ENCODE measurements at regions of chr17 and their contacts with region 1.

Region 1: DNA sequence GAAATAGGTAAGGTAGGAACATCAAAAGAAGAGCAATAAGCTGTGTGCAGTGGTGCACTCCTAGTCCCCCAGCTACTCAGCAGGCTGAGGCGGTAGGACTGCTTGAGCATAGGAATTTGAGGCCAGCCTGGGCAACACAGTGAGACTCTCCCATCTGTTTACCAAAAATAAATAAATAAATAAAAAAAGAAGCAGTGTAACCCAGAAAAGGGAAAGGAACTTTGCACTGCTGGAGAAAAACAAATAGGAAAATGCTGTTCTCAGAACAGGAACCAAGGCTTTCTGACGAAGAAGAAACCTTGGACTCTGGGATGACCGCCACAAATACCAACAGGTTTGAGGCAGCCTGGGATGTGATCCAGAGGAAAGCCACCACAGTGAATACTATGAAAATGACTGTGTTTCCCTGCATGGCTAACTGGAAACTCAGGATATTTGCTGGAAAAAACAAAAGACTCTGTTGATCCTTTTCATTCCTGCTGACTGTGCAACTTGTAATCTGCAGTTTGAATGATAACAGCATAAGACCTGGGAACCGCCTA is 41.2 kb downstream of the TTC19 start:
- DNase-seq: no peak
- H3K4me3 ChIP-seq: no peak overlapping the region
- H3K4me3 Mint-ChIP-seq: no peak overlapping the region
- H3K27ac Mint-ChIP-seq: no peak overlapping the region
- H3K4me1 ChIP-seq: no peaks in the 10 kb centered on the region
- H3K4me1 Mint-ChIP-seq: no peaks in the 10 kb centered on the region
- H3K27me3 ChIP-seq: no peaks in the 10 kb centered on the region
- H3K27me3 Mint-ChIP-seq: no peaks in the 10 kb centered on the region
- CTCF ChIP-seq: no peak

Region 2: DNA sequence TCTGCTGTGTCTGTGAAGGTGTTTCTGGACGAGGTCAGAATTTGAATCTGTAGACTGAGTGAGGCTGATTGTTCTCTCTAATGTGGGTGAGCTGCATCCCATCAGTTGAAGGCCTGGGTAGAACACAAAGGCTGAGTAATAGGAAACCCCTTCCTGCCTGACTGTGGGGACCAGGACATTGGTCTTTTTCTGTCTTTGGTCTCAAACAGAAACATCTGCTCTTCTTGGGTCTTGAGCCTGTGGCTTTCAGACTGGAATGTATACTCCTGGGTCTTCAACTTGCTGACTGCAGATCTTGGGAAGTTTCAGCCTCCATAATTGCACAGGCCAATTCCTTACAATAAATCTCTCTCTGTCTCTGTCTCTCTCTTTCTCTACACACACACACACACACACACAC is 470.8 kb after region 1 on chr17:
- CTCF ChIA-PET with region 1: no interaction called
- POLR2A ChIA-PET with region 1: interaction called, 14 read pairs
- intact Hi-C with region 1: no loop called
- DNase-seq: no peak
- H3K4me3 ChIP-seq: no peak overlapping the region
- H3K4me3 Mint-ChIP-seq: no peak overlapping the region
- H3K27ac Mint-ChIP-seq: no peak overlapping the region
- H3K4me1 ChIP-seq: peaks cover 12% of the 10 kb centered on the region
- H3K4me1 Mint-ChIP-seq: peaks cover 21% of the 10 kb centered on the region
- H3K27me3 ChIP-seq: no peaks in the 10 kb centered on the region
- H3K27me3 Mint-ChIP-seq: no peaks in the 10 kb centered on the region
- CTCF ChIP-seq: no peak